AG04449 (cell line): ENCODE measurements at regions of chr5 and their contacts with region 1.

Region 1: GRCh38 chr5:57650360-57651069 is 167.9 kb upstream of the ACTBL2 start:
- DNase-seq: no peak
- H3K4me3 ChIP-seq: no peak overlapping the region
- CTCF ChIP-seq: peak; percentile 63

Region 2: DNA sequence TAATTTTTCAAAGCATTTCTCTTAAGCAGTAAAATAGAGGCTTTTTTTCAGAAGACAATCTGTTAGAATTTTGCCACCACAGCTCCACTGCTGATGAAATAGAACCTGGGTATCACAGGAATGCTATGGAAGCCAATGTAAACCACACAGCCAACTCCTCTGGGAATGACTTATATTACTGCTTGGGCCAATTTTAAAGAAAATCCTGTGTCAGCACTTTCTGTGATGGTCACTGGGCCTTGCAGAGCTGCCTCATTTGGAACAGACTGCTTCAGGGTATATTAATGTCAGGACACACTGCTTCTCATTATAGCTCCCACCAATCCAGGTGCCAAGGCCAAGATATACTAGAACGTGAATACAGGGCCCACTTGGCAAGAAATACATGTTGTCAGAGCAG is 23.8 kb before region 1 on chr5:
- CTCF ChIA-PET with region 1: interaction called, 24 read pairs
- POLR2A ChIA-PET with region 1: no interaction called
- DNase-seq: no peak
- H3K4me3 ChIP-seq: no peak overlapping the region
- CTCF ChIP-seq: no peak

Region 3: DNA sequence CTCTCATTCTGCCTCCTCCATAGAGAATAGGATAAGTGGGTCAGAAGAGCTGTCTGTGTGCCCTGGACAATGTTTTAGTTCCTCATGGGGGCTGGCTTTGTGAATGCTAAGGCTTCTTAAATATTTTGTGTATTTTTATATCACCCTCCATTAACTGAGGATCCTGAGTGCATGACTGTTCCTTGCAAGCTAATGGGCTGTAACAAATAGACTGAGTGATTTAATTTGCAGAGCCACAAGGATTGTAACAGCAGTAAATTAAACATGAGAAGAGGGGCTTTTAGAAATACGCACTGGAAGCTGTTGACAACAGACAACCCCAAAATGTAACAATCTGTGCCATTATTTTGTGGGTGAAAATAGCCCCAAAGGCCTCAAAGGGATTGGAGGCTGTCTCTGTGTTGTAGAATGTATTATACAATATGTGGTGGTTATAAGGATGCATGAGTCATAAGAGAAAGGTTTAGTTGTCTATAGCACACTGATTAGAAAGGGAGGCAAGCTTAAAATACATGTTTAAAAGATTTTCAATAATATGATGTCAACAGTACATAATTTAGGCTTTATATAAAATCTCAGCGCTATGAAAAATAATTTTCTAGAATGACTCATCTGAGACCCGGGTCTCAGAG is 15.3 kb before region 1 on chr5:
- CTCF ChIA-PET with region 1: interaction called, 37 read pairs
- POLR2A ChIA-PET with region 1: no interaction called
- DNase-seq: no peak
- H3K4me3 ChIP-seq: no peak overlapping the region
- CTCF ChIP-seq: no peak

Region 4: GRCh38 chr5:57662991-57663390 is 12.5 kb after region 1 on chr5:
- CTCF ChIA-PET with region 1: interaction called, 24 read pairs
- POLR2A ChIA-PET with region 1: no interaction called
- DNase-seq: no peak
- H3K4me3 ChIP-seq: no peak overlapping the region
- CTCF ChIP-seq: no peak

Region 5: DNA sequence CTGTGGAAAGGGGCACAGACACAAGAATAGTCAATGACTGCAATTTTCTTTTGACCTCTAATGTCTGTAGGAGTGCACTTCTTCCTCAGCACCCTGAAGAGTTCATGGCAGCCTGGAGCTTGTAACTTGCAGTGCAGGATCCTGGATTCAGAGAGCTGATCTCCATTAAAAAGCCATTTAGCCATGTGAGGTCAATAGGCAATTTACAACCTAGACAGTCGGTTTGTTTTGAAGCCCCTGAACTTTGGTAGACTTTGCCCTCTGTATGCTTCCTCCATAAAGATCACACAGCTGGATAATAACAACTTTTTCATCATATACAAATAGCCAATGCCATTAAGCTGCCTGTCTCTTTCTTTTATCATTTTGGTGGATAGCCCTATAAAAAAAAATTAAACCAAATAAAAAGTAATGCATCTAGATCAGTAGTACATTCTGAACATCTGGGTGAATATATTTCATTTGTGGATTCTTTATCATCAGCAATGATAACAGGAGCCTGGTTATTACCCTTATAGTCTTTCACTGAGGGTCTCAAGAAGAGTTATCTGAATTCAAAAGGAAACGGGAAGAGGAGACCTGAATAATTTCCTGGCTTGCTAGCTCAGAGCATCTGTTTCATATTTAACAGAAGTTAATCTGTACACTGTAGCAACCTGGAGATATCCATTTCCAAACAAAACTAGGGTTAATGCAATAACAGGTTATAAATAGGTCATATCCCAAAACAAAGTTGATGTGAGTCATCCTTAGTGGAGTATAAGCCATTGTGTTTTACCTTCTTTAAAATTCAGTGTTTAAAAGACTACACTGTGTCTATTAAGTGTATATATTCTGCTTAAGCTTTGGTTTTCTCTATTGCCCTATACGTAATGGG is 25.9 kb after region 1 on chr5:
- CTCF ChIA-PET with region 1: interaction called, 15 read pairs
- POLR2A ChIA-PET with region 1: no interaction called
- DNase-seq: no peak
- H3K4me3 ChIP-seq: no peak overlapping the region
- CTCF ChIP-seq: no peak

Region 6: DNA sequence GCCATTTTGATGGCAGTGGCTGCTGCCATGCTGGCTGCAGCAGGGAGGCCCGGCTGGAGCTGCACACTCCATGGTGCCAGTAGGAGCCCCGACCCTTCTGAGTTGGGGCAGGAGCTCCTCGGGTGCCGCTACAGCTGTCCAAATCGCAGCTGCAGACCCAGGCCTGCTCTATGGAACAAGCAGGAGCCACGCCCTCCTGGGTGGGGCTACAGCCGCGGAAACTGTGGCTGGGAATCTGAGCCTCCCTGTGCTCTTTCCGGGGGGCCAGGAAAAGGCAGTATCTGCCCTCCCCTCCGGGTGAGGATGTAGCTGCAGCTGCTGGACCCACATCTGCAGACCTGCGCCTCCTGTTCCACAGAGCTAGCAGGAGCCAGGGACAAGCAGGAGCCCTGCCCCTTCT is 111.0 kb after region 1 on chr5:
- CTCF ChIA-PET with region 1: interaction called, 10 read pairs
- POLR2A ChIA-PET with region 1: no interaction called
- DNase-seq: no peak
- H3K4me3 ChIP-seq: no peak overlapping the region
- CTCF ChIP-seq: no peak

Region 7: DNA sequence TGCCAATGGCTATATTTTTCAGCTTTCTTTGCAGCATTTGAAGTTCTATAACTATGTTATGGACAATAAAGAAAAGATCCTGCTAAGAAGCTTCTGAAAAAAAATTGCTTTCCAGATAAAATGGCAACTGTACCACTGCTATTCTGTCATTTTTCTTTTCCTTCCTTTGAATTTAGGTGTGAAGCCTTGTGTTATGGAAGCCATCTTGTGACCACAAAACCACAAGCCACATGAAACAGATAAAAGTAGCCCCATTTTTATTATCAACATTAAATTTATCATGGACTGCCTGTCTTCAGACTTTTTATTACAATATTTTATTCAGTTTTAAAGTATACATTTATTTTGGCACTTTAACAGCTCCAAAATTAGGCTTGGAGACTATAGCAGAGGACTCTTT is 122.0 kb after region 1 on chr5:
- CTCF ChIA-PET with region 1: interaction called, 57 read pairs
- POLR2A ChIA-PET with region 1: no interaction called
- DNase-seq: no peak
- H3K4me3 ChIP-seq: no peak overlapping the region
- CTCF ChIP-seq: no peak